Activated B cell treated with CpG ODN at 0.5 μM for 24 hours (primary cell): ENCODE measurements at regions of chr5 and their contacts with region 1.

Region 1: GRCh38 chr5:139633295-139634027 is 14.7 kb upstream of the CXXC5 start:
- DNase-seq: peak; percentile 63
- ATAC-seq: peak; percentile 15
- H3K4me3 Mint-ChIP-seq: no peak overlapping the region
- H3K27ac Mint-ChIP-seq: peak overlapping the region; percentile 97
- H3K4me1 Mint-ChIP-seq: peaks cover 53% of the 10 kb centered on the region
- H3K27me3 Mint-ChIP-seq: no peaks in the 10 kb centered on the region
- CTCF ChIP-seq: peak; percentile 56

Region 2: DNA sequence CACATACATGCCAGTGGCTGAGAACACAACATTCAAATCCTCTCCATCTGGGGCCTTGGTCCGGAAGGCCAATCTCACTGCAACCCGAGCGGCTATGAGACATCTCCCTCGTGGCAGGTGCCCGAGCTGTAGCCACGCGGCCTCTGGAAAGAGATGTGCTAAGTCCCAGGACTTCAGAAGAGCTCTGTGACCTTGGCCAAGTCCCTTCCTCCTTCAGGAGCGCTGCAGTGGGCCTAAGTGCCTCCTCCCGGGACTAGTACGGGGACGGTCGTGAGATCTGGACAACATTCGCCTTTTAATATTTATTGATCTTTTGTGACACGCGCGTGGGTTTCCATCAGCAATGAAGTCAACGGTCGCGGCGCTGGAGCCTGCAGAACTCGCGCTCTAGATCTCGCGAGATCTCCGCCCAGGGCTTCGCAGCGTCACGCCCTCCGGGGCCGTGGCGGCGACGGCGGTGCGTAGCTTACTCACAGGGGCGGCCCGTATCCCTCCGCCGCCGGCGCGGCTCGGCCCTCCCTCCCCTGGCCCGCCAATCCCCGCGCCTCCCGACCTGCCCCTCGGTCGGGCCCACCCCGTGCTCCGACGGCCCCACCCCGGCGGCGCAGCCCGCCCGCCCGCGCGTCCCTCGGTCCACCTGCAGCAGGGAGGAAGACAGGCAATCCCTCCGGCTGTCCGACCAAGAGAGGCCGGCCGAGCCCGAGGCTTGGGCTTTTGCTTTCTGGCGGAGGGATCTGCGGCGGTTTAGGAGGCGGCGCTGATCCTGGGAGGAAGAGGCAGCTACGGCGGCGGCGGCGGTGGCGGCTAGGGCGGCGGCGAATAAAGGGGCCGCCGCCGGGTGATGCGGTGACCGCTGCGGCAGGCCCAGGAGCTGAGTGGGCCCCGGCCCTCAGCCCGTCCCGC is 72.5 kb before region 1 on chr5 and contains the start of gene UBE2D2:
- CTCF ChIA-PET with region 1: interaction called, 9 read pairs
- POLR2A ChIA-PET with region 1: interaction called, 30 read pairs
- intact Hi-C with region 1: no loop called
- DNase-seq: peak; percentile 95
- ATAC-seq: peak; percentile 86
- H3K4me3 Mint-ChIP-seq: peak within 1 kb of the TSS; percentile 93
- H3K27ac Mint-ChIP-seq: peak within 1 kb of the TSS; percentile 95
- H3K4me1 Mint-ChIP-seq: peaks cover 41% of the 10 kb centered on the region
- H3K27me3 Mint-ChIP-seq: no peaks in the 10 kb centered on the region
- CTCF ChIP-seq: no peak
- total RNA-seq, gene UBE2D2: 152 and 172 TPM in 2 replicates

Region 3: GRCh38 chr5:139660923-139661814 is 27.7 kb after region 1 on chr5:
- CTCF ChIA-PET with region 1: interaction called, 101 read pairs
- POLR2A ChIA-PET with region 1: interaction called, 417 read pairs
- intact Hi-C with region 1: loop called (anchors 1 kb)
- DNase-seq: peak; percentile 69
- ATAC-seq: peak; percentile 71
- H3K4me3 Mint-ChIP-seq: peak overlapping the region; percentile 75
- H3K27ac Mint-ChIP-seq: peak overlapping the region; percentile 96
- H3K4me1 Mint-ChIP-seq: peaks cover 94% of the 10 kb centered on the region
- H3K27me3 Mint-ChIP-seq: no peaks in the 10 kb centered on the region
- CTCF ChIP-seq: no peak

Region 4: GRCh38 chr5:139690064-139690802 is 56.8 kb after region 1 on chr5:
- CTCF ChIA-PET with region 1: interaction called, 325 read pairs
- POLR2A ChIA-PET with region 1: interaction called, 179 read pairs
- intact Hi-C with region 1: loop called (anchors 1 kb)
- DNase-seq: no peak
- ATAC-seq: peak; percentile 56
- H3K4me3 Mint-ChIP-seq: no peak overlapping the region
- H3K27ac Mint-ChIP-seq: peak overlapping the region; percentile 67
- H3K4me1 Mint-ChIP-seq: peaks cover 53% of the 10 kb centered on the region
- H3K27me3 Mint-ChIP-seq: no peaks in the 10 kb centered on the region
- CTCF ChIP-seq: peak; percentile 19

Region 5: GRCh38 chr5:139745800-139746690 is 112.6 kb after region 1 on chr5:
- CTCF ChIA-PET with region 1: interaction called, 7 read pairs
- POLR2A ChIA-PET with region 1: interaction called, 86 read pairs
- intact Hi-C with region 1: loop called (anchors 1 kb)
- DNase-seq: peak; percentile 60
- ATAC-seq: peak; percentile 16
- H3K4me3 Mint-ChIP-seq: peak overlapping the region; percentile 89
- H3K27ac Mint-ChIP-seq: peak overlapping the region; percentile 93
- H3K4me1 Mint-ChIP-seq: peaks cover 74% of the 10 kb centered on the region
- H3K27me3 Mint-ChIP-seq: no peaks in the 10 kb centered on the region
- CTCF ChIP-seq: no peak

Region 6: GRCh38 chr5:139787568-139788293 is 154.3 kb after region 1 on chr5:
- CTCF ChIA-PET with region 1: interaction called, 11 read pairs
- POLR2A ChIA-PET with region 1: interaction called, 3 read pairs
- intact Hi-C with region 1: no loop called
- DNase-seq: peak; percentile 92
- ATAC-seq: peak; percentile 93
- H3K4me3 Mint-ChIP-seq: peak overlapping the region; percentile 88
- H3K27ac Mint-ChIP-seq: no peak overlapping the region
- H3K4me1 Mint-ChIP-seq: peaks cover 11% of the 10 kb centered on the region
- H3K27me3 Mint-ChIP-seq: peaks cover 19% of the 10 kb centered on the region
- CTCF ChIP-seq: no peak